Panc1 (cell line): ENCODE measurements at regions of chr3 and their contacts with region 1.

Region 1: DNA sequence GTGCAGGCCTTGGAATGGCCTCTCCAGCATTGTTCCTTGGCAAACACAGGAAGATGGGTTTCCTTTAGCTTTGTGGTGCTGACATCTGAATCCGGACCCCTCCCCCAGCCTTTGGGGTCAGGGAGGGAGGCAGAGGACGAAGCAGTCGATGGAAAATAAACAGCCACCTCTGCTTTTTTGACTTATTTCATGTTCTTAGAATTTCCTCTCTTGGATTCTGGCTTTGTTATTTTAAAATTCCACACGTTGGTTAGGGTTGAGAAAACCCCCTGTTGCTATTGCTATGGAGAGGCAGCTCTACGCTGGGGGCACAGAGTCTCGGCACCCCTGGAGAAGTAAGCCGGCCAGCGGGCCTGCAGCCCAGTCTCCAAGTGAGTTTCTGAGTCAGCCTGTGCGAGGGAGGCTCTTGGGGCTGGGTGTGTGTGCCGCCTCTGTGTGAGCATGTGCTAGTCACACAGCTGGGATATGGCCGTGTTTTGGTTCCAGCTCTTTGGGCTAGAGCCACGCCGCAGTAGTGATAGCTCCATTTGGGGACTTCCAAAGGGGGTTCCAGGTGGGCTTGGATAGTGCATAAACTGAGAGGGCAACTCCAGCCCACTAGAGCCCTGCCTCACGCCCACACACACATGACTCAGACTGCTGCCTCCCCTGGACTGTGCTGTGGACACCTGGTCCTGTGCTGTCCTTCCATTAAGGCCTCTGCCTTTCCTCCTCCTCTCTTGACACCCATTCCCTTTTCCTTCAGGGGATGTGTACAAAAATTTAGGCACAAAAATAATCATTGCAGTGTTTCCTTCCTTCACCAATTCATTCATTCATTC is 58.8 kb downstream of the AMOTL2 start:
- DNase-seq: no peak
- ATAC-seq: peak; percentile 60
- H3K4me3 ChIP-seq: no peak overlapping the region
- H3K27ac ChIP-seq: peak overlapping the region; percentile 83
- H3K4me1 ChIP-seq: peaks cover 68% of the 10 kb centered on the region
- H3K27me3 ChIP-seq: no peaks in the 10 kb centered on the region
- CTCF ChIP-seq: no peak

Region 2: DNA sequence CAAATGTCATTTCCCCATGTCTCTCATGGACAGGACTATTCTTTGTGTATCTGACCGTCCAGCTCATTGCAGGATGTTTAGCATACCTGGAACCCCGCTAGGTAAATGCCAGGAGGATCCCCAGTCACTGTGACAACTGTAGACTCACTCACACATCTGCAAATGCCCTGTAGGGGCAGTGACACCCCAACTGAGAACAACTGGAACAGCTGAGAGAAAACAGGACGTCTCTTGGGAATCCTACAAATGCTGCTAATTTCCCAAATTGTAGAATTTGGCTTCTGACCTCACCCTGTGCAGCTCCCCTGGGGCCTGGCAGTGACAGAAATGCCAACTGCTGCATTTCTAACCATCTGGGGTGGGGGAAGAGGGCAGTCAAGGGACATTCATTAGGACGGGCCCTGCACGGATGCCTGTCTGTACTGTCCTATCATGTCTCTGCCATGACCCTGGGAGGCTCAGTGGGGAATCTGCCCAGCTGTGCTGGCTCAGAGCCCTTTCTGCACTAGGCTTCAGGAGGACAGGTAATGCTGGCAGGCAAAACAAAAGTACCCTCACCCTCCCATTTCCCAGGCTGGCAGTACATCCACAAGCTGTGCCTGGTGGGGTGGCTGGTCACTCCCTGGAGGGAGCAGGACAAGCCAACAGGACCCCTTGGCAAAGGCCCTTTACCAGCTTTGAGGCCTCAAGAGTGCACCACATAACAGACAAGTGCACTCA is 450.2 kb before region 1 on chr3:
- CTCF ChIA-PET with region 1: no interaction called
- POLR2A ChIA-PET with region 1: no interaction called
- in situ Hi-C with region 1: no loop called
- intact Hi-C with region 1: no loop called
- DNase-seq: no peak
- ATAC-seq: 0 out of 2 replicates have a peak, but pooled peaks have one; percentile 13
- H3K4me3 ChIP-seq: no peak overlapping the region
- H3K27ac ChIP-seq: no peak overlapping the region
- H3K4me1 ChIP-seq: no peaks in the 10 kb centered on the region
- H3K27me3 ChIP-seq: no peaks in the 10 kb centered on the region
- CTCF ChIP-seq: no peak

Region 3: GRCh38 chr3:134212906-134213665 is 102.4 kb before region 1 on chr3:
- CTCF ChIA-PET with region 1: no interaction called
- POLR2A ChIA-PET with region 1: no interaction called
- in situ Hi-C with region 1: no loop called
- intact Hi-C with region 1: no loop called
- DNase-seq: peak; percentile 60
- ATAC-seq: peak; percentile 97
- H3K4me3 ChIP-seq: no peak overlapping the region
- H3K27ac ChIP-seq: no peak overlapping the region
- H3K4me1 ChIP-seq: peaks cover 6% of the 10 kb centered on the region
- H3K27me3 ChIP-seq: no peaks in the 10 kb centered on the region
- CTCF ChIP-seq: peak; percentile 100

Region 4: DNA sequence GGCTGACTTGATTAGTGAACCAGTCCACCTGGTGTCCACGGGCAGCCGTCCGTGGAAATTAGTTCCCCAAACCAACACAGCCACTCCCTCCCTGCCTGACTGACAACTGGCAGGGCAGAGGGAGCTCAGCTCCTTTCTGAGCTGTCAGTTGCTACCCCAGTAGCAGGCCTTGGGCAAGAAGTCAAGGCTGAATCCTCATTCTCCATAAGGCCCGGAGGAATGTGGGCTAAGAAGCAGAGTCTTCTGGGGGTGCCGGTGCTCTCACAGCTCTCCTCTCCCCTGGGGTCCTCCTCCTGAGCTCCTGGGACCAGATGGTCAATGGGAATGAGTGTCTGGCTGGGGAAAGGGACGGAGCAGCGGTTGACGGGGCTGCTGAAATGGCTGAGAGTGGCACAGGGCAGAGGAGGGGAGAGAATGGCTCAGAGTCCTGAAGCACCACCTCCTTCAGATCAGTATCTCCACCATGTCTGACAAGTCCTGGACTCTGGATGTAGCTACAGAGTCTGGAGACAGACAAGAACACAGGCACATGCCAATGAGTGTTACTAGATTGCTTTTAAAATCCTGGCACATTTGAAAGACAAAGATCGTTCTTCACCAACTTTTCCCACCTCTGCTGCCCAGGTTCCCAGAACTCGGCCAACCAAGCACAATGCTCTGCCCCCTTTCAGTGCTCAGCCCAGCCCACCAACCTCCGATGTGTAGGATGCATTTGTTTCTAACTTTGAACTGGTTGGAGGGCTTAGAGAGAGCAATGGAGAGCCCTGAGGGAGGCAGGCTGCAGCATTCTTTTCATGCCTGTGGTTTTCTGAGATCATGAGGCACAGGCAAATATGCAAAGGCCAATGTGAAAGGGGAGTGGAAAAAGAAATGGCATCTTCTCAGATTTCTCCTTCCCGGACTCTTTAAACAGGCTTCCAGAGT is 42.0 kb after region 1 on chr3:
- CTCF ChIA-PET with region 1: no interaction called
- POLR2A ChIA-PET with region 1: no interaction called
- in situ Hi-C with region 1: no loop called
- intact Hi-C with region 1: loop called (anchors 2 kb)
- DNase-seq: no peak
- ATAC-seq: peak; percentile 72
- H3K4me3 ChIP-seq: 0 out of 4 replicates have a peak overlapping the region, but pooled peaks of 1 of the 2 experiments have one; percentile 2
- H3K27ac ChIP-seq: peak overlapping the region; percentile 96
- H3K4me1 ChIP-seq: peaks cover 99% of the 10 kb centered on the region
- H3K27me3 ChIP-seq: no peaks in the 10 kb centered on the region
- CTCF ChIP-seq: no peak

Region 5: DNA sequence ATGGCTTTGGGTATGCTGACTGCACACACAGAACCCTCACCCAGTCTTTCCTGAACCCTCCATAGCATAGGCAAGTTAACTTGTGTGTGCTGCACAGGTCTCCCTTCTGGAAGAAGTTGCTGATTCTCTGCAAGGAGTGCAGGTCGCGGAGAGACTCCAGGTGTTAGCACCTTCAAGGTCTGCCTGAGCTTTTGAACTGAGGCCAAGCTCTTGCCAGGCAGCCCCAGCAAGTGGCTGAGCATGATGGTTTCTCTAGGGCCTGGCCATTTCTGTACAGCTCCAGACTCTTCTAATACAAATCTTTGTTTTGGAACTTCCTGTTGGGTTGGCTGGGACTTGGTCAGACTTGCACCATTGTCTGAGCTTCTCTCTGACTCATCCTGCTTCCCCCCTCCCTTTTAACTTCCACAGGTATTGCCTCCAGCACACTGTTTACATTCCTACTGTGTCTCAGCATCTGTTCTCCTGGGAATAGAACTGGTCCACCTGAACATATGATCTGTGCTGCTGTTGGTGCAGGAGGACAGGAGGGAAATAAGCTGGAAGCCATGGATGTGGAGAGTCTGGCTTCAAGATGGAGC is 282.0 kb after region 1 on chr3:
- CTCF ChIA-PET with region 1: no interaction called
- POLR2A ChIA-PET with region 1: no interaction called
- in situ Hi-C with region 1: no loop called
- intact Hi-C with region 1: no loop called
- DNase-seq: no peak
- ATAC-seq: no peak
- H3K4me3 ChIP-seq: no peak overlapping the region
- H3K27ac ChIP-seq: no peak overlapping the region
- H3K4me1 ChIP-seq: peaks cover 5% of the 10 kb centered on the region; the same call in 1 of the 2 replicates
- H3K27me3 ChIP-seq: peaks cover 12% of the 10 kb centered on the region
- CTCF ChIP-seq: no peak